Heart right ventricle (tissue), 16 donors: ENCODE measurements at regions of chr6 and their contacts with region 1.

Region 1: GRCh38 chr6:13487122-13488014 is at the start of gene GFOD1:
- DNase-seq: peak; percentile 90 to 92
- ATAC-seq: peak; percentile 83 to 94 (median 86)
- H3K4me3 ChIP-seq: peak within 1 kb of the TSS; percentile 69 to 98 (median 90)
- H3K27ac ChIP-seq: peak within 1 kb of the TSS; percentile 91 to 98 (median 94)
- H3K4me1 ChIP-seq: peaks cover 3 to 46% (median 39%) of the 10 kb centered on the region in 9 donors
- H3K27me3 ChIP-seq: no peaks in the 10 kb centered on the region
- CTCF ChIP-seq: peak in 4 of 9 donors; percentile 20 to 40 (median 32)
- total RNA-seq, gene GFOD1: 26.5 to 96.5 (median 41.0) TPM

Region 2: GRCh38 chr6:13407709-13408695 is 79.4 kb before region 1 on chr6:
- intact Hi-C with region 1: loop called in 5 of 10 experiments (anchors 2 to 5 kb)
- DNase-seq: peak in 1 of 2 donors; percentile 48
- ATAC-seq: peak in 7 of 8 donors; percentile 8 to 63 (median 35)
- H3K4me3 ChIP-seq: no peak overlapping the region
- H3K27ac ChIP-seq: peak overlapping the region; percentile 54 to 89 (median 82)
- H3K4me1 ChIP-seq: peaks cover 36 to 96% (median 91%) of the 10 kb centered on the region in 9 donors
- H3K27me3 ChIP-seq: no peaks in the 10 kb centered on the region
- CTCF ChIP-seq: no peak

Region 3: GRCh38 chr6:13422681-13423221 is 64.6 kb before region 1 on chr6:
- intact Hi-C with region 1: loop called in 3 of 10 experiments (anchors 5 to 10 kb)
- DNase-seq: no peak
- ATAC-seq: peak in 3 of 8 donors; percentile 13 to 57 (median 46)
- H3K4me3 ChIP-seq: no peak overlapping the region
- H3K27ac ChIP-seq: peak overlapping the region; percentile 44 to 84 (median 74)
- H3K4me1 ChIP-seq: peaks cover 41 to 100% (median 99%) of the 10 kb centered on the region in 9 donors
- H3K27me3 ChIP-seq: no peaks in the 10 kb centered on the region
- CTCF ChIP-seq: no peak

Region 4: DNA sequence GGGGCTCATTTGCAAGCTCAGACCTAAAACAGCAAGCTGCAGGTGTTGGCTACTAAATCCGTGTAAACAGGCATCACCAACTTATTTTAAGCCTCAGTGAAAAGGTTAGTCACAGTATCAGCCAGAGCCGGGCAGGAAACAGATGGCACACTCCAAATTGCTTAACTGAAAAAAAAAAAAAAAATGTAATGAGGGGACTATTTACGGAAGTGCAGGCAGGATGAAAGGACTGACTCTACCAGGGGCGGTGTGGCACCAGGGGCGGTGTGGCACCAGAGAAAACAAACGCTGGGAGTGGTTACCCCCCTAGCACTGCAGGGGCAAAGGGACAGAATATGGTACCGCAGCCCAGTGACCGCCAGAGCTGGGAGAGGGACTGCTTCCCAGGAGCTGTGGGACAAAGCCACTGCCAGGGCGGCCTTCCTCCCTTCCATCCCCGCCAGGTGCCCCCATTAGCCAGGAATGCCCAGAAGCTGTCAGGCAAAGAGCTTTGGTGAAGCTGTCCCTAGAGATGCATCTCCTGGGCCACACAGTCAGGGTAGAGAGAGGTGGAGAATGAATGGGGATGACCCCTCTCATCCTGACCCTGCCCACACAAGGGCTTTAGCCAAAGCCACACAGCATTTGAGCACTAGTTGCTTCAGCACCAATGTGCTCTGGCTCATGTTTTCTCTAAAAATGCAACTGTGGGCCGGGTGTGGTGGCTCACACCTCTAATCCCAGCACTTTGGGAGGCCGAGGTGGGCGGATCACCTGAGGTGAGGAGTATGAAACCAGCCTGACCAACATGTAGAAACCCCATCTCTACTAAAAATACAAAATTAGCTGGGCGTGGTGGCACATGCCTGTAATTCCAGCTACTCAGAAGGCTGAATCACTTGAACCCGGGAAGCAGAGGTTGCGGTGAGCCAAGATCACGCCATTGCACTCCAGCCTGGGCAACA is 39.6 kb after region 1 on chr6:
- intact Hi-C with region 1: loop called in 4 of 10 experiments (anchors 2 to 5 kb)
- DNase-seq: peak; percentile 31
- ATAC-seq: peak; percentile 44 to 84 (median 72)
- H3K4me3 ChIP-seq: no peak overlapping the region
- H3K27ac ChIP-seq: peak overlapping the region; percentile 56 to 86 (median 80)
- H3K4me1 ChIP-seq: peaks cover 5 to 64% (median 49%) of the 10 kb centered on the region in 9 donors
- H3K27me3 ChIP-seq: no peaks in the 10 kb centered on the region
- CTCF ChIP-seq: no peak

Region 5: DNA sequence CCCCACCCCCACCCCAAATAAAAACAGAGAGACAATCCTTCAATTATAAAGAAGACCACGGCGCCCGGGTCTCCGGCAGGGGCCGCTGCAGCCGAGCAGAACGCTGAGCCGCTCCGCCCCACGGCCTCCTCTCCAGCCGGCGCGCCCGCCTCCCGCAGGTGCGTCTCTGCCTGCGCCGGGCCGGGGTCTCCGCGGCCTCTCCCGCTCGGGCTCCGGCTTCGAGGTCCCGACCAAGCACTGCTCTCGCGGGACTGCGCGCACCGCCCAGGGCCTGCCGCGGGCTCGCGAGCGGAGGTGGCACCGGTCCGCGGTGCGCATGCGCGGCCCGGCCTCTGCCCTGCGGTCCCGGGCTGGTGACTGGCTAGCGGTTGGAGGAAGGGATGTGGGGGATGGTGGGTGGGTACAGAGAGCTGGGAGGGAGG is 86.8 kb after region 1 on chr6:
- intact Hi-C with region 1: loop called in 6 of 10 experiments (anchors 2 to 10 kb)
- DNase-seq: peak; percentile 92 to 93
- ATAC-seq: peak; percentile 95 to 97 (median 96)
- H3K4me3 ChIP-seq: peak overlapping the region; percentile 53 to 90 (median 74)
- H3K27ac ChIP-seq: peak overlapping the region; percentile 87 to 100 (median 98)
- H3K4me1 ChIP-seq: peaks cover 4 to 32% (median 21%) of the 10 kb centered on the region in 9 donors
- H3K27me3 ChIP-seq: no peaks in the 10 kb centered on the region
- CTCF ChIP-seq: peak; percentile 30 to 76 (median 49)